ENCODE measurements at regions of chr20 and their contacts with region 1.

Region 1: DNA sequence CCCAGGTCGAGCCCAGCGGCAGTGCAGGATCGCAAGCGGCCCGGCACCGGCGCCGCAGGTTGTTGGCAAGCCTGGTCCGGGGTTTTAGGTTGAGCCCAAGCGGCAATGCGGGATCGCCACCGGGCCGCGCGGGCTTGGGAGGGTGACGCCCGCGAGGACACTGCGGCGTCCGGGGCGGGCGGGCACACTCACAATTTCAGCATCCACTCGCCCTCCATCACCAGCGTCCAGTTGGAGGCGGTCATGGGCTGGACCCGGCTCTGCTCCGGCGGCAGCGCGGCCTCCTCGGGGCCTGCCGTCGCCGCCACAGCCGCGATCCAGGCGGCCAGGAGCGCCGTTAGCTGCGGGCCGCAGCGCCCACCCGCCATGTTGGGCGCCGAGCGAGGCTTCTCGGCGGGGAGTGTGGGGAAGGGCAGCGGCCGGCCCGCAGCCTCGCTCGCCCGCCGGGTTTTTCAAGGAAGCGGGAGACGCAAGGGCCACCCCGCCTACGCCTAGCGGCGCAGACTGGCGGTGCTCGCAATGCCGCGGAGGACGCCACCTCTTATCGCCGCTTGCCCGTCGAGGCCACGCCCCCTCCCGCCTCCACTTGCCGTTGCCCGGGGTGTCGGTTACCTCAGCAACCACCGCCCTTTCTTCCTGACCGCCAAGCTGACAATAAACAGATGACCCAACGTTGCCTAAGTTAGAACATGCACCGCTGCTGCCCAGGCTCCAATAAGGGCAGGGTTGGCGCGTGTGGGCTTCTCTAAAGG is at the start of gene TMX4:
- DNase-seq: peak; percentile 93
- ATAC-seq: peak; percentile 88
- H3K4me3 Mint-ChIP-seq: peak within 1 kb of the TSS; percentile 90
- H3K27ac Mint-ChIP-seq: peak within 1 kb of the TSS; percentile 79
- H3K4me1 Mint-ChIP-seq: peaks cover 27% of the 10 kb centered on the region
- H3K27me3 Mint-ChIP-seq: no peaks in the 10 kb centered on the region
- CTCF ChIP-seq: no peak
- total RNA-seq, gene TMX4: 19.4 and 24.8 TPM in 2 replicates

Region 2: DNA sequence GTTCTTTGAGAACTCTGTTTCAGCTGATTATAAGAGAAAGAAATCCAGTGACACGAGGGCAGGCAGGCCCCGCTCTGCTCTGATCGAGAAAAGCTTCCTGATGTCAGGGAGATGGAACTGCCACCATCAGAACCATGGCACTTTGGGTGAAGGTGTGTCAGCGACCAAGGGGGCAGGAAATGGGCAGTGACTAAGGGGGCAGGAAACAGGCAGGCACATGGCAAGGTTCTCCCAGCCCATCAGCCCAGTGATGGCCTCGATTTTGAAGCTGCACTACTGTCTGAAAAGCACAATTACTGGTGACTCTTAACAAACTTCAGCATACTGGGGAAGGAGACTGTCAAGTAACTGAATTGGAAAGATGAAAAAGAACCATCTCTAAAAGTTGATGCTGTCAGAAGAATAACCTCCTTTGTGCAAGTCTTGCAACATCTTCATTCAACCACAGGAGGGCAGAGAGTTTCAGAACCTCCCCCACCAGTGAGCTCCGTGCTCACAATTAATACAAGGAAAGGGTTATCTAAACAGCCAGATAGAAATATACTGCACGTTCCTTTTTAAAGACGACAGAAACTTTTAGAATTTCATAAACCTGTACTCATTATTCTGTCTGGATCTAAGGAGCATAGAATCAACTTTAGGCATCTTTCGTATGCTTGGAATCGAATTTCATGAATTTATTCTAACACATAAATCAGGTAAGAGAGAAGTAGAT is 38.9 kb before region 1 on chr20:
- CTCF ChIA-PET with region 1: no interaction called
- POLR2A ChIA-PET with region 1: no interaction called
- intact Hi-C with region 1: loop called (anchors 2 kb)
- DNase-seq: no peak
- ATAC-seq: no peak
- H3K4me3 Mint-ChIP-seq: no peak overlapping the region
- H3K27ac Mint-ChIP-seq: no peak overlapping the region
- H3K4me1 Mint-ChIP-seq: no peaks in the 10 kb centered on the region
- H3K27me3 Mint-ChIP-seq: no peaks in the 10 kb centered on the region
- CTCF ChIP-seq: no peak

Region 3: DNA sequence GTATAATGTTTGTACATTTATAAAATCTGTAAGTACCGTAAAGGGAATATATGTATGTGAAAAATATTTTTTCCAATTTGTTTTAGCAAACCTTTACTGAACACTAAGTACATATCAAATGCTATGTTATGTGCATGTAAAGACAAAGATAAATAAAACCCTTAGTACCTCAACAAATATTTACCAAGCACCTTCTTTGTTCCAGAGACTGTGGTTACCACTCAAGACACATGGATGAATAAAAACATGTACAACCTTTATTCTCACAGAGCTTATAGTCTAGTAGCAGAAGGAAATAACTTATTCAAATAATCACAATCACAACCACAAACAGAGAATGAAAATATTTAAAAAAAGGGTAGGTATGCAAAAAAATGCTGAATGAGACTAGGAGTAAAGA is 17.4 kb before region 1 on chr20:
- CTCF ChIA-PET with region 1: no interaction called
- POLR2A ChIA-PET with region 1: no interaction called
- intact Hi-C with region 1: loop called (anchors 2 kb)
- DNase-seq: no peak
- ATAC-seq: no peak
- H3K4me3 Mint-ChIP-seq: no peak overlapping the region
- H3K27ac Mint-ChIP-seq: no peak overlapping the region
- H3K4me1 Mint-ChIP-seq: no peaks in the 10 kb centered on the region
- H3K27me3 Mint-ChIP-seq: no peaks in the 10 kb centered on the region
- CTCF ChIP-seq: no peak

Region 4: GRCh38 chr20:8043687-8044282 is 24.4 kb after region 1 on chr20:
- CTCF ChIA-PET with region 1: interaction called, 4 read pairs
- POLR2A ChIA-PET with region 1: interaction called, 4 read pairs
- intact Hi-C with region 1: loop called (anchors 1 kb)
- DNase-seq: no peak
- ATAC-seq: peak; percentile 70
- H3K4me3 Mint-ChIP-seq: no peak overlapping the region
- H3K27ac Mint-ChIP-seq: no peak overlapping the region
- H3K4me1 Mint-ChIP-seq: peaks cover 1% of the 10 kb centered on the region
- H3K27me3 Mint-ChIP-seq: peaks cover 6% of the 10 kb centered on the region
- CTCF ChIP-seq: peak; percentile 68

Region 5: DNA sequence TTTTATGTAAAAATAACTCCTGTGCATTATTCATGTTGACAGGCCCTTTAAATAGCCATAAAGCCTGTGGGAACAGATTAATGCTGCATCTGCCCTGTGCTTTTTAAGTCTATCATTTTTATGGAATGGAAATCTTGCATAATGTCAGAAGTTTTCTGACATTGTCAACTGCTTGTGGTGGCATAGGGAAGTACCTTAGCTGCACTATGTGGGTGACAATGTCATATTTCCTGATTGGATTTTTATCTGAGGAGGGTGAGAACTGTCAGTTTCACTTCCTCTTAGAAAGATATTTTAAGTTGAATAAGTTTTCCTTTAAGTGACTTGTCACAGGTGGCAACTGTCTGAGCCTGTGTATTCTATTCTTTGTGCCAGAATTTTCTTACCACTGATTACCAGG is 380.5 kb after region 1 on chr20:
- CTCF ChIA-PET with region 1: no interaction called
- POLR2A ChIA-PET with region 1: no interaction called
- intact Hi-C with region 1: loop called (anchors 1 kb)
- DNase-seq: no peak
- ATAC-seq: peak; percentile 91
- H3K4me3 Mint-ChIP-seq: no peak overlapping the region
- H3K27ac Mint-ChIP-seq: no peak overlapping the region
- H3K4me1 Mint-ChIP-seq: peaks cover 15% of the 10 kb centered on the region
- H3K27me3 Mint-ChIP-seq: no peaks in the 10 kb centered on the region
- CTCF ChIP-seq: no peak

Region 6: DNA sequence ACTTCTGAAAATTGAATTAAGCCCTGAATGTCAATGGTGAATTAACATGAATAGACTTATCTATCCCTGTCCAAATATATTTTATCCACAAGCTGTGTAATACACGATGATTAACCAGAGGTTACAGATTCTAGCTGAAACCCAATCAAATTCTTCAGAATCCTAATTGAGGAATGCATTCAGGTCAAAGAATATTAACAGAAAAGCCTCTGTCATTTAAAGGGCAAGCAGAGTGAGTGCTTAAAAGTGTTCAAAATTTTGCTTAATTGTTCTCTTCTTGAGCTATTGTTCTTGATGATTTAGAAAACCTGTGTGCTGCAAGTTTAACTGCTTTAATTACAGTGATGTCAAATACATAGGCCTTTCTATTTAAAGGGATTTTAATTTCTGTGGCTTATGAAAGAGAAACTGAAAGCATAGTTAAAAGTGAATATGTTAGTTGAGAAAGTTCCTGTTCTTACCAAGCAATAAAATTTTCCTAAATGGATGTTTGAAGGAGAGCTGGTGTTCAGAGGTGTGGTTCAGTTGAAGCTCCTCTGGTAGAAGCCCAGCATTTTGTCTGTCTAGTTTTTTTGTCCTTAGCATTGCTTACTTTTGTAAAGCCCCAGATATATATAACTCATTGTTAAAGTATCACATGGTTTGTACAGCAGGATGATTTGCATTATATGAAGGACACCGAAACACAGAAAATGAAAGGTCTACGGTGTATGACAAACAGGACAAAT is 583.1 kb after region 1 on chr20:
- CTCF ChIA-PET with region 1: no interaction called
- POLR2A ChIA-PET with region 1: no interaction called
- intact Hi-C with region 1: loop called (anchors 10 kb)
- DNase-seq: no peak
- ATAC-seq: peak; percentile 68
- H3K4me3 Mint-ChIP-seq: peak overlapping the region; percentile 82
- H3K27ac Mint-ChIP-seq: peak overlapping the region; percentile 90
- H3K4me1 Mint-ChIP-seq: peaks cover 29% of the 10 kb centered on the region
- H3K27me3 Mint-ChIP-seq: no peaks in the 10 kb centered on the region
- CTCF ChIP-seq: no peak

Measured in activated B cell treated with CpG ODN at 0.5 μM for 24 hours (primary cell).